PC-3 (cell line): ENCODE measurements at regions of chr11 and their contacts with region 1.

Region 1: GRCh38 chr11:102614485-102614884 is 10.6 kb downstream of the MMP20 start:
- DNase-seq: peak; percentile 35
- ATAC-seq: no peak
- H3K4me3 ChIP-seq: no peak overlapping the region
- H3K27ac ChIP-seq: no peak overlapping the region
- H3K4me1 ChIP-seq: peaks cover 6% of the 10 kb centered on the region
- H3K27me3 ChIP-seq: no peaks in the 10 kb centered on the region
- CTCF ChIP-seq: peak; percentile 53; the same call in 1 of the 2 replicates

Region 2: DNA sequence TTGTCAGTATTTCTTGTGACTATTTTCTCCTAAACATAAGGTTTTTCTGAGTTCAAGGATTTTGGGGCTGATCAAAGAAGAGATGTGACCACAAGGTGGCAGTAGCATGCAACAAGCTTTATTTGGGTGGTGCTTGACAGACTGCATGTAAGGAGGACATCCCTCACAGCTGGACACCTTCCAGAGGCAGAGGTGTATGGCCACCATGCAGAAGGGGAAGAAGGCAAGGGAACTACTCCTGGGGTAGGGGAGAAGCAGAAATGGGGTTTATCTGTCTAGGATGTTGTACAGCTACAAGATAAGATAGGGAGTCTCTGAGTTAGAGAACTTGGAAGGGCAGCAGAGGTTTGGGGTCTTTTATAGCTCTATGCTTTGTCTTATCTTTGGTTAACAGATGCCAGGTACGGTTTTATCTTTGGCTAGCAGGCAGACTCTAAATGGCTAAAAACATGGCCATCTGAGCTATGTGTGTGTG is 272.6 kb before region 1 on chr11:
- CTCF ChIA-PET with region 1: interaction called, 5 read pairs
- POLR2A ChIA-PET with region 1: no interaction called
- intact Hi-C with region 1: loop called (anchors 1 kb)
- DNase-seq: peak; percentile 93
- ATAC-seq: peak; percentile 52
- H3K4me3 ChIP-seq: no peak overlapping the region
- H3K27ac ChIP-seq: no peak overlapping the region
- H3K4me1 ChIP-seq: peaks cover 21% of the 10 kb centered on the region
- H3K27me3 ChIP-seq: no peaks in the 10 kb centered on the region
- CTCF ChIP-seq: peak; percentile 96

Region 3: GRCh38 chr11:102390667-102391465 is 223.6 kb before region 1 on chr11:
- CTCF ChIA-PET with region 1: interaction called, 4 read pairs
- POLR2A ChIA-PET with region 1: no interaction called
- intact Hi-C with region 1: loop called (anchors 2 kb)
- DNase-seq: peak; percentile 87
- ATAC-seq: peak; percentile 87
- H3K4me3 ChIP-seq: no peak overlapping the region
- H3K27ac ChIP-seq: no peak overlapping the region
- H3K4me1 ChIP-seq: no peaks in the 10 kb centered on the region
- H3K27me3 ChIP-seq: no peaks in the 10 kb centered on the region
- CTCF ChIP-seq: peak; percentile 97

Region 4: DNA sequence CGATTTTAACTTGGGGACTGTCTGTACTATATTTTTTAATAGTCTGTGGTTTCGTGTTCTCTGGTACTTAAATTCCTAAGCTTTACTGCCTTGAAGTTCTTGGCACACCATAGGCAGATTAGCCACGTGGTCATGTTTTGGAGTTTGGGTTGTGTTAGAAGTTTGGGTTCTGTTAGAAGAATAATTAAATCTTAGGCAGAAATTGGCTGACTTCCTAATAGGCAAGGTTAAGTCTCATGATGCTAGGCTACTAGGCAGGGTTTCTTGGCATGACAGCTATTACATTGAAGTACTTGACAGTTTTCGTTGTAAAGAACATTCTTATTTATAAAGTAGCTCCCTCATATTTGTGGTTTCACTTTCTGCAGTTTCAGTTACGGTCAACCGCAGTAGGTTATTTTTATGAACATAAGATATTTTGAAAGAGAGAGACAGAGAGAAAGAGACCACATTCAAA is 53.9 kb before region 1 on chr11:
- CTCF ChIA-PET with region 1: no interaction called
- POLR2A ChIA-PET with region 1: no interaction called
- intact Hi-C with region 1: loop called (anchors 5 kb)
- DNase-seq: peak; percentile 65
- ATAC-seq: peak; percentile 44
- H3K4me3 ChIP-seq: peak overlapping the region; percentile 60
- H3K27ac ChIP-seq: peak overlapping the region; percentile 55
- H3K4me1 ChIP-seq: peaks cover 43% of the 10 kb centered on the region
- H3K27me3 ChIP-seq: no peaks in the 10 kb centered on the region
- CTCF ChIP-seq: no peak

Region 5: DNA sequence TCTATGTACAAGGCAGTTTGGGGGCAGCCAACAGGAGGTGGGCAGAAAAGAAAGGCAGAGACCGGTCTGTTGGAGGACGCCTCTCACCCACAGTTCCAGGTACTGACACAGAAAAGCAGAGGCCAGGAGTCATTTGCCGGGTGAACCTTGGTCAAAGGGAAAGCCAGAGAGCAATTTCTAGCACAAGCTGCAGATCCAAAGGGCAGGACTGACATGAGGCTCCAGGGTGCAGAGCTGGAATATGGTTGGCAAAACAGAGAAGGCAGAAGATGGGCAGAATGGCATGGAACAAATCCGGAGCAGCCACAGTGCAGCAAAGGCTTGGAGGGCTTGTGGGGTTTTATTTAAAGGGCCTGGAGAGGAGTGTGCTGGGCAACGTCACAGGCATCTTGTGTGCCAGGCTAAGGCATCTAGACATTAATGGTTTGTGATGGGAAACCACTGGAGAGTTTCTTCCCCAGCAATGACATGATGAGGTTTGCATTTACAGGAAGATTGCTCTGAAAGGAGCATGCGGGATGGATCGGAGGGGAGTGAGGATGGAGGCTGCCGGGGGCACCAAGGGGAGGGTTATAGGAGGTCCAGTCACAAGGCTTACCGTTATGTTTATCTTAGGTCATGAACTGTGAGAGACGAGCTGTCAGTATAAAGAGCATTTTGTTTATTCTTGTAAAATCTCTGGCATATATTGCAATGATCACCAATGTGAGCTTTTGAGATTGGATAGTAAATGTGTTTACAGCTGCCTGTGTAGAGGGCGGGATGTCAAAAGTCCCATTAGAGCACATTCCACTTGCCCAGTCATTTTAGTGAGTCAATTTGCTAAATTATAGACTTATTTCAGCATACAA is 16.3 kb after region 1 on chr11:
- CTCF ChIA-PET with region 1: no interaction called
- POLR2A ChIA-PET with region 1: no interaction called
- intact Hi-C with region 1: no loop called
- DNase-seq: no peak
- ATAC-seq: no peak
- H3K4me3 ChIP-seq: no peak overlapping the region
- H3K27ac ChIP-seq: no peak overlapping the region
- H3K4me1 ChIP-seq: peaks cover 3% of the 10 kb centered on the region; the same call in 1 of the 2 replicates
- H3K27me3 ChIP-seq: no peaks in the 10 kb centered on the region
- CTCF ChIP-seq: no peak